Heart right ventricle (tissue), 16 donors: ENCODE measurements at regions of chr1 and their contacts with region 1.

Region 1: GRCh38 chr1:77961392-77961791 is 17.5 kb downstream of the FUBP1 start:
- DNase-seq: no peak
- ATAC-seq: no peak
- H3K4me3 ChIP-seq: no peak overlapping the region
- H3K27ac ChIP-seq: no peak overlapping the region
- H3K4me1 ChIP-seq: no peaks in the 10 kb centered on the region
- H3K27me3 ChIP-seq: no peaks in the 10 kb centered on the region
- CTCF ChIP-seq: no peak

Region 2: GRCh38 chr1:77605246-77606026 is 356.0 kb before region 1 on chr1:
- intact Hi-C with region 1: no loop called
- DNase-seq: peak; percentile 53 to 60
- ATAC-seq: peak; percentile 68 to 93 (median 84)
- H3K4me3 ChIP-seq: no peak overlapping the region
- H3K27ac ChIP-seq: peak overlapping the region in 4 of 10 donors; percentile 15 to 40 (median 22)
- H3K4me1 ChIP-seq: peaks cover 0 to 22% (median 13%) of the 10 kb centered on the region in 9 donors
- H3K27me3 ChIP-seq: no peaks in the 10 kb centered on the region
- CTCF ChIP-seq: no peak

Region 3: DNA sequence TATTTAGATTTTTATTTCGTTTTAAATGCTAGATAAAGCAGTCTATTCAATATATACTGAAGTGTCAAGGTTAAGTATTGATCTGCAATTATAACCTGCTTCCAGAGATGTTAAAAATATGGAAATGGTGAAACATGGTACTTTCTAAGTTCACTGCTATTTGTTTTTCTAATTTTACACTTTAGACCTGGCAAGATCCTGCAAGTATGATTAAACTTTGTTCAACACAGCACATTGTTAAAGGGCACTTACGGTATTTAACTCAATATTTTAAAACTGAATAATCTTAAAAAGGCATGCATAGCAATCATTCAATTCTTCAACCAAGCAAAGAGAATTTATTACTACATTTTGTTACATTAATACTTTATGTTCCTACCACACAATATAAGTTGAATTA is 243.2 kb before region 1 on chr1:
- intact Hi-C with region 1: loop called in 1 of 10 experiments (anchors 10 kb)
- DNase-seq: no peak
- ATAC-seq: no peak
- H3K4me3 ChIP-seq: no peak overlapping the region
- H3K27ac ChIP-seq: no peak overlapping the region
- H3K4me1 ChIP-seq: no peaks in the 10 kb centered on the region
- H3K27me3 ChIP-seq: no peaks in the 10 kb centered on the region
- CTCF ChIP-seq: no peak

Region 4: GRCh38 chr1:78165816-78166215 is 204.4 kb after region 1 on chr1:
- intact Hi-C with region 1: no loop called
- DNase-seq: no peak
- ATAC-seq: no peak
- H3K4me3 ChIP-seq: no peak overlapping the region
- H3K27ac ChIP-seq: no peak overlapping the region
- H3K4me1 ChIP-seq: no peaks in the 10 kb centered on the region
- H3K27me3 ChIP-seq: no peaks in the 10 kb centered on the region
- CTCF ChIP-seq: no peak